ENCODE measurements at regions of chr2 and their contacts with region 1.

Region 1: DNA sequence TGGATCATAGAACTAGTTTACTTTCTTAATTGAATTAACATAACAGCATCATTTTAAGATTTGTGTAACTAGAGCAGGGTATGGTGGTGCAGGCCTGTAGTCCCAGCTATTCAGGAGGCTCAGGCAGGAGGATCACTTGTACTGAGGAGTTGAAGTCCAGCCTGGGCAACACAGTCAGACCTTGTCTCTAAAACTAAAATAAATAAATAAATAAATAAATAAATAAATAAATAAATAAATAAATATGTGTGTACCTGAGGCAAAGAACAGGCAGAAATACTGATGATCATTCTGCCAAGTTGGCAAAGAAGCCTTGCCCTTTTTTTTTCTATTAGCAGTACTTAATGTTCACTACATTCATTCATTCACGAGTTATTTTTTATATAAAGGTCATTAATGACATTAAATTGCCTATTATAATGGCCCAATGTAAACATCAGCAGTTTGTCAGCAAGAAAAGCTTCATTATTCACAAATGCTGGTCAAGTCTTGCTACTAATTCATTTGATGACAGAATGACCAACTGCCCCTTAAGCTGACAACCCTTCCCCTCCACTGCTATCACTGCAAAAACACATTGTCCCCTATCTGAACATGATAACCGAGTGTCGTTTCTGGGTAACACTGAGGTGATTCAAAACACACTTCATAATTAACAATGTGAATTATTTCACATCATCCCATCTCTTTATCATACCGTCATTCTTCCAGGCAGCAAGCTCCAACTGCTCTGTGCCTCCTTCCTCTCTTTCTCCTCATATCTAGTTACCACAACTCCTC is 39.0 kb downstream of the ARL5A start:
- DNase-seq: no peak
- H3K4me3 ChIP-seq: no peak overlapping the region
- H3K27ac ChIP-seq: no peak overlapping the region
- H3K4me1 ChIP-seq: no peaks in the 10 kb centered on the region
- H3K27me3 ChIP-seq: no peaks in the 10 kb centered on the region
- CTCF ChIP-seq: no peak
- EP300 ChIP-seq: no peak
- POLR2A ChIP-seq: no peak
- RAD21 ChIP-seq: no peak

Region 2: DNA sequence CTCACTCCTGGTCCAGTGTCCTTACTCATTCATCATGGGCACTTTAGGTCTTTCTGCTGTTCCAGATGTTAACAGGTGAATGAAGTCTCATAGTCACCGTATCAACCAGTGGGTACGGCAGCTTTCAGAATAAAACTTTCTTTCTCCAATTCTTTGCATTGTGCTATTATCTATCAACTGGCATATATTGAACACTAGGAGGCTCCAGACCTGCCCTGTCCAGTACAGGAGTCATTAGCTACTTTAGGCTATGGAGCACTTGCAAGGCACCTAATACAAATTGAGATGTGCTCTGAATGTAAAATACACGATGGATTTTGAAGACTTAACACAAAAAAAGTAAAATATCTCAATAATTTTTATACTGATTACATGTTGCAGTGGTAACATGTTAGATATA is 11.8 kb before region 1 on chr2:
- CTCF ChIA-PET with region 1: interaction called, 10 read pairs
- POLR2A ChIA-PET with region 1: interaction called, 3 read pairs
- DNase-seq: no peak
- H3K4me3 ChIP-seq: no peak overlapping the region
- H3K27ac ChIP-seq: no peak overlapping the region
- H3K4me1 ChIP-seq: no peaks in the 10 kb centered on the region
- H3K27me3 ChIP-seq: no peaks in the 10 kb centered on the region
- CTCF ChIP-seq: peak in 1 of 3 experiments; percentile 25; a peak in 2 of 4 replicates
- EP300 ChIP-seq: no peak
- POLR2A ChIP-seq: no peak
- RAD21 ChIP-seq: peak in 1 of 2 experiments; percentile 22; a peak in 1 of 4 replicates

Region 3: DNA sequence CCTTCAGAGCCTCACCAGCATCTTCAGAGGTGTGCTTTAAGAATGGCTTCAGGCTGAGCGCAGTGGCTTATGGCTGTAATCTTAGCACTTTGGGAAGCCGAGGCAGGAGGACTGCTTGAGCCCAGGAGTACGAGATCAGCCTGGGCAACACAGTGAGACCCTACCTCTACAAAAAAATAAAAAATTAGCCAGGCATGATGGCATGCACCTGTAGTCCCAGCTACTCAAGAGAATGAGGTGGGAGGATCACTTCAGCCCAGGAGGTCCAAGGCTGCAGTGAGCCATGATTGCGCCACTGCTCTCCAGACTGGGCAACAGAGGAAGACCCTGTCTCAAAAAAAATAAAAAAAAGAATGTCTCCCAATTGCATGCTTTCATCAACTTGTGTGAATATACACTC is 172.3 kb after region 1 on chr2:
- CTCF ChIA-PET with region 1: no interaction called
- POLR2A ChIA-PET with region 1: no interaction called
- DNase-seq: no peak
- H3K4me3 ChIP-seq: no peak overlapping the region
- H3K27ac ChIP-seq: no peak overlapping the region
- H3K4me1 ChIP-seq: no peaks in the 10 kb centered on the region
- H3K27me3 ChIP-seq: no peaks in the 10 kb centered on the region
- CTCF ChIP-seq: no peak
- EP300 ChIP-seq: no peak
- POLR2A ChIP-seq: no peak
- RAD21 ChIP-seq: no peak